AG04450 (cell line): ENCODE measurements at regions of chr6 and their contacts with region 1.

Region 1: GRCh38 chr6:23494367-23494766 is 631.6 kb upstream of the NRSN1 start:
- DNase-seq: no peak
- H3K4me3 ChIP-seq: no peak overlapping the region
- H3K27ac ChIP-seq: no peak overlapping the region
- H3K27me3 ChIP-seq: no peaks in the 10 kb centered on the region
- CTCF ChIP-seq: no peak

Region 2: GRCh38 chr6:23045280-23045679 is 449.1 kb before region 1 on chr6:
- CTCF ChIA-PET with region 1: interaction called, 13 read pairs
- POLR2A ChIA-PET with region 1: no interaction called
- DNase-seq: no peak
- H3K4me3 ChIP-seq: no peak overlapping the region
- H3K27ac ChIP-seq: no peak overlapping the region
- H3K27me3 ChIP-seq: no peaks in the 10 kb centered on the region
- CTCF ChIP-seq: no peak

Region 3: GRCh38 chr6:23446394-23447046 is 47.8 kb before region 1 on chr6:
- CTCF ChIA-PET with region 1: no interaction called
- POLR2A ChIA-PET with region 1: no interaction called
- DNase-seq: peak; percentile 45
- H3K4me3 ChIP-seq: no peak overlapping the region
- H3K27ac ChIP-seq: no peak overlapping the region
- H3K27me3 ChIP-seq: no peaks in the 10 kb centered on the region
- CTCF ChIP-seq: peak; percentile 84

Region 4: DNA sequence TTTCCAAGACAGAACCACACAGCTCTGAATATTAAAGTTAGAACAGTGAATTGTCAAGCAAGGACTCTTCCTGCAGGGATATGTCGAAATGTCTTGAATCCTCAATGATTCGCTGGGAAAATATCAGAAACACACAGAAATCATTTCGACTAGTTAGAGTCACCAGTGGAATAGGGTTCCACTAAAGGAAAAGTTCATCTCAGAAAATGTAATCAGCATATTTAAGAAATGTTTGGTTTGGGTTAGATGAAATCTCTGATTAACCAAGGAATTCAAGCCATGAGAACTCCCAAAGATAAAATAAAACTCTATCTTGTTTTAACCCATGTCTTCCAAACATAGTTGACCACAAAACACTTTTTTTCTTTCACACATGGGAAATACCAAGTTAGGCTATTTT is 10.7 kb after region 1 on chr6:
- CTCF ChIA-PET with region 1: no interaction called
- POLR2A ChIA-PET with region 1: no interaction called
- DNase-seq: peak; percentile 3
- H3K4me3 ChIP-seq: no peak overlapping the region
- H3K27ac ChIP-seq: no peak overlapping the region
- H3K27me3 ChIP-seq: no peaks in the 10 kb centered on the region
- CTCF ChIP-seq: no peak

Region 5: GRCh38 chr6:23696992-23697391 is 202.6 kb after region 1 on chr6:
- CTCF ChIA-PET with region 1: no interaction called
- POLR2A ChIA-PET with region 1: no interaction called
- DNase-seq: no peak
- H3K4me3 ChIP-seq: no peak overlapping the region
- H3K27ac ChIP-seq: no peak overlapping the region
- H3K27me3 ChIP-seq: no peaks in the 10 kb centered on the region
- CTCF ChIP-seq: no peak